CD8-positive, alpha-beta T cell (primary cell): ENCODE measurements at regions of chr2 and their contacts with region 1.

Region 1: GRCh38 chr2:74250189-74250631 is 51.8 kb downstream of the MTHFD2 start:
- DNase-seq: peak; percentile 7 to 79 (median 54)
- ATAC-seq: peak; percentile 75
- H3K4me3 ChIP-seq: no peak overlapping the region
- H3K4me3 Mint-ChIP-seq: no peak overlapping the region
- H3K27ac ChIP-seq: no peak overlapping the region
- H3K27ac Mint-ChIP-seq: no peak overlapping the region
- H3K4me1 ChIP-seq: peaks cover 3% of the 10 kb centered on the region
- H3K4me1 Mint-ChIP-seq: peaks cover 2% of the 10 kb centered on the region
- H3K27me3 ChIP-seq: no peaks in the 10 kb centered on the region
- H3K27me3 Mint-ChIP-seq: no peaks in the 10 kb centered on the region
- CTCF ChIP-seq: peak; percentile 83

Region 2: GRCh38 chr2:74399785-74400184 is 149.6 kb after region 1 on chr2:
- CTCF ChIA-PET with region 1: interaction called, 9 read pairs
- POLR2A ChIA-PET with region 1: no interaction called
- intact Hi-C with region 1: loop called in 1 of 2 experiments (anchors 2 kb)
- DNase-seq: peak in 2 of 9 experiments; percentile 56 to 64
- ATAC-seq: peak; percentile 82
- H3K4me3 ChIP-seq: no peak overlapping the region
- H3K4me3 Mint-ChIP-seq: no peak overlapping the region
- H3K27ac ChIP-seq: no peak overlapping the region
- H3K27ac Mint-ChIP-seq: no peak overlapping the region
- H3K4me1 ChIP-seq: no peaks in the 10 kb centered on the region
- H3K4me1 Mint-ChIP-seq: no peaks in the 10 kb centered on the region
- H3K27me3 ChIP-seq: no peaks in the 10 kb centered on the region
- H3K27me3 Mint-ChIP-seq: peaks cover 9% of the 10 kb centered on the region
- CTCF ChIP-seq: peak; percentile 58